GM18951 (cell line): ENCODE measurements at regions of chr10 and their contacts with region 1.

Region 1: DNA sequence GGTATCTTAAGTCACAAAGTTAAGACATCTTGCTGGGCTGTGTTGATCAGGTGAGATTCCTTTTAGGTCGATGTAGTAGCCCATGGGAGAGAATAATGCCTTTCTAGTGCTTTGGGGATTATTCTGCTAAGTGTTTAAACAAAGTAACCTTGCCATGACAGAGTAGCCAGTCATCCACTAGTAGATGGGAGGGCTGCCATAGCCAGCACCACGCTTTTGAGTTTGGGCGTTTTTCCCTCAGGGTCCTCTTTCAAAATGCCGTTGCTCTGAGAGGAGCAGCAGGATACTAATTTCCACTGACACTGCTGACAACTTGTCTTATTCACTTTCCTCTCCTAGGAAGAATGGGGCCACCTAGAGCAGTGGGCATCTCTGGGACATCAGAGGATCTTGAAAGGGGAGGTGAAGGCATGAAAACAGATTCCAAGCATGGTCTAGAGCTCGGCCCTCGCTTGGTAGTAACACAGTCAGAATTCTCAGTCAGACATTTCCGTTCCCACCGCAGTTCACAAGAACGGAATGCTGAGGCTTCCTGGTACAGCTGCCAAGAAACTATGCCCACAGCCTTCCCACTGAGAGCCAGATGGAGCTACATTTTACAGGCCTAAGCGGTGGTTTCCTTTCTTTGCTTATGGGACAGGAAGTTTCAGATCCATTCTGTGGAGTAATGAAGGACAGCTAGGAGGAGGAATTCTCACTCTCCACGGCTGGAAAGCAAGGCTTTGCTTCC is 15.3 kb upstream of the RSU1 start:
- POLR2A ChIP-seq: no peak

Region 2: DNA sequence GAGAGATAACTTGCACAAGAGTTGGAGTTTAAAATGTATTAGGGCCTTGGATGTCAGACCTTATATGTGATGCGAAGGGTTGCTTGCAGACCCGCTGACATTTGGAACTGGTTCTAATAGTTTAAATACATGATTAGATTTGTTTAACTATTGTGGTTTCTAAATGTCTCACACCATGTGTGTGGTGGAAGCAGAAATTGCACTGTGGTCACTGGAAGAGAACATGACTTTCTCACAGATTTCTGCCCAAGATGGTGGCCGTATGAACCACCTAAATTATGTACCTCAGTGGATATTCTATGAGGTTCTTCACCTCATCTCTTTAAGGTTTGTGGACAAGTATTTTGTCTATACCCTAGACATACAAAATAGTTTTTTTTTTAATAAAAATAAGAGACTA is 302.7 kb before region 1 on chr10:
- in situ Hi-C with region 1: no loop called
- POLR2A ChIP-seq: no peak

Region 3: DNA sequence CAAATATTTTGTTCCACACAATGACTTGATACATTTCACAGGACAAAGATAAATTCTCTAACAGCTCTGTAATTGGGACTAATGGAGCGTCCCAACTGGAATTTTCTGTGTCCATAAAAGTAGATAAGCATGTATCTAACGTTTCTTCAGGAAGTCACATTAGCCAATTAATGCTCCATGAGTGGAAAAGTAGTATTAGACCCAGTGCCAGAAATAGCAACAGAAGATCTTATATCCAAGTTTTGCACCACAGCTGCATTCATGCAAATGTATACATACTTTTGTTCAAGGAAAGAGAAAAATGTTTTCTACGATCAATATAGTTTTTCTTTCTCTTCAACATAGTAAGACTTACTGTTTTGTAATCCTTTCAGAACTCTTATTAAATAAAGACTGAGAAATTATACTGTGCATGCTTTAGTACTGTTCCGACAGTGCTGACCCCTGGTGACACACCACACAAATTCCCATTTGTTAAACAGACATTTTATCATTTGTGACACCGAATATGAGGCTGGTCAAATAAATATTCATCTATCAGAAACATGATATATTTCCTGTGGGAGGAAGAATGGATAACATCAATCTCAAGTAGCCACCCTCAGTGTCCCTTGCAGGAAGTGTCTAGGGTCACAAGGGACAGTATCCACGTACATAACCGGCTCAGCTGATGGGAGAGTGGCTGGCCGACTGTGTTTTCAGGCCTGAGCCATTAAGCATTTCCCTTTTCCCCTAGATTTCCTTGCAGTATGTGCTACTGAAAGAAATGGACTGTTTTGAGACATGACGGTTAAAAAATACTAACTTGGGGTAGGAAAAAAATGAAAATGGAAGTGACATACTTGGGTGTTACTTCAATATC is 86.8 kb after region 1 on chr10:
- in situ Hi-C with region 1: no loop called
- POLR2A ChIP-seq: no peak

Region 4: GRCh38 chr10:17249820-17250219 is 417.3 kb after region 1 on chr10:
- in situ Hi-C with region 1: loop called (anchors 5 kb)
- POLR2A ChIP-seq: no peak